A549 (cell line): ENCODE measurements at regions of chr17 and their contacts with region 1.

Region 1: GRCh38 chr17:45051060-45051719 is at the start of gene DCAKD:
- DNase-seq: peak; percentile 93 to 97
- ATAC-seq: peak; percentile 97 to 99
- H3K4me3 ChIP-seq: peak within 1 kb of the TSS; percentile 54
- H3K27ac ChIP-seq: peak within 1 kb of the TSS; percentile 91 to 95
- H3K4me1 ChIP-seq: peaks cover 35% of the 10 kb centered on the region
- CTCF ChIP-seq: no peak
- EP300 ChIP-seq: no peak
- POLR2A ChIP-seq: peak; percentile 75
- RAD21 ChIP-seq: no peak
- polyA plus RNA-seq, gene DCAKD: 21.4 and 26.2 TPM in 2 replicates

Region 2: DNA sequence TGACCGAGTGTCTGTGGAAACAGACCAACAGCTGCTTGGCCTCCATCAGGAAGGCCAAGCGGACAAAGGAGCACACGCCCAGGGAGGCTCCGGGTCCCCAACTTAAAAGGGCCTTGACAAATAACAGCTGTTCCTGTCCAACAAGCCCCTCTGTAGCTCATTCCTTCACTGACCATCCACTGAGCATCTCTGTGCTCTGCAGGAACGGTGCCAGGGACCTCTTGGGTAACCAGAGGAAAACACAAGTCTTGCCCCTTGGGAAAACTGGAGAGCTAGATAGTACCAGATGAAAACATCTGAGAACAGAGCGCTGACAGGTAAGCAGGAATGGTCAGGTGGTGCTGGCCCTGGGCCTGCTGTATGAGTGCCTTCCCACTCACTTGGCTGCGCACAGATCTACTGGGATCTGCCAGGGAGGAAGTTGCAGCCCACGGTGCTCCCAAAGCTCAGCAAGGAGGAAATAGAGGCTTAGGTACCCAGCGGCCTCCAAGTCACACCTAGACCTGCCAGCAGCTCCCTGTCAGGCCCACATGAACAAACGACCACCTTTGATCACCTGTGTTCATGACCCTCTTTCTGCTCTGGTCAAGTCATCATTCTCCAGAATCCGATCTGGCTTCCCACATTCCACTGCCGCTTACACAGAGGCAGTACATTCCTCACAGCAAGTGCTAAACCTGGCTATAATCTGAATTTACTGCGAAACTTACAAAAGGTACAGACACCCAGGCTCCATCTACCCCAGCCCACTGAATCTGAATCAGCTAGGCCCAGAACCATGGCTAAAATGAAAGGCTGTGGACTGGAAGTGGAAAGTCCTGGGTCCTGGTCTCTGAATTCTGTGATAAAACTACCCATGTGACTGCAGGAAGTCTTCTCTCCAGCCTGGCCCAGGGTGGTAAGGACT is 12.2 kb before region 1 on chr17:
- CTCF ChIA-PET with region 1: interaction called, 28 read pairs
- POLR2A ChIA-PET with region 1: interaction called, 5 read pairs
- DNase-seq: no peak
- ATAC-seq: no peak
- H3K4me3 ChIP-seq: no peak overlapping the region
- H3K27ac ChIP-seq: 0 out of 6 replicates have a peak overlapping the region, but pooled peaks of 1 of the 2 experiments have one; percentile 0
- H3K4me1 ChIP-seq: peaks cover 12% of the 10 kb centered on the region; the same call in 1 of the 3 replicates
- CTCF ChIP-seq: no peak
- EP300 ChIP-seq: no peak
- POLR2A ChIP-seq: no peak
- RAD21 ChIP-seq: no peak